ENCODE measurements at regions of chr4 and their contacts with region 1.

Region 1: GRCh38 chr4:136864580-136865185 is 667.6 kb downstream of the PCDH18 start:
- DNase-seq: peak; percentile 79
- ATAC-seq: peak; percentile 66
- H3K4me3 ChIP-seq: no peak overlapping the region
- H3K27ac ChIP-seq: no peak overlapping the region
- H3K4me1 ChIP-seq: no peaks in the 10 kb centered on the region
- H3K27me3 ChIP-seq: no peaks in the 10 kb centered on the region
- CTCF ChIP-seq: peak; percentile 81

Region 2: DNA sequence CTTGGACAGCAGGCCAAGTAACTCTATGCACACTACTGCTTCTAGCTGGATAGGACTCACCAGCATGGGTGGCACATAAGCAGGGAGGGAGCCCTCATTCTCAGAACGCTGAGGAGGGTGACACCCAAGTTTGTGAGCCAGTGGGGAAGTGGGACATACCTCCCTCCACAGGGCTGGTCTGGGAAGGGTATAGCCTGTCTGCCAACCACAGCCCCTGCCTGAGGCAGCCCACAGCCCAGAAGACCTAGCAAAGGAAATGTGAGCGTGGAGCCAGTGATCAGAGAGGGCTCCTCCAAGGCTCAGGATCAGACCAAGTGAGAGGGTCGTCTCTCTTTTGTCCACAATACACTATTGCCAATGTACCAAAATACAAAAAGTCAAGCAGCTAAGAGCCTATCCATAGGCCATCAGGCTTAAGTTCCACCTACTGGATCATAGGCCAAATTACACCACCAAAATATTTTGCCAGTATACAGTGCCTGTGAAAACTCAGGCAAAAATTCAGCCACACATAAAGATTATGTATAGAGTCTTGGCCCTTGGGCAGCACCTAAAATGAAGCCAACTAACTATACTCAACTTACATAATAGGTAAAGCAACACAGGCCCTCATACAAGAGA is 535.5 kb before region 1 on chr4:
- CTCF ChIA-PET with region 1: no interaction called
- POLR2A ChIA-PET with region 1: no interaction called
- intact Hi-C with region 1: loop called (anchors 5 kb)
- DNase-seq: peak; percentile 20
- ATAC-seq: peak; percentile 70
- H3K4me3 ChIP-seq: no peak overlapping the region
- H3K27ac ChIP-seq: no peak overlapping the region
- H3K4me1 ChIP-seq: no peaks in the 10 kb centered on the region
- H3K27me3 ChIP-seq: no peaks in the 10 kb centered on the region
- CTCF ChIP-seq: peak; percentile 50

Region 3: DNA sequence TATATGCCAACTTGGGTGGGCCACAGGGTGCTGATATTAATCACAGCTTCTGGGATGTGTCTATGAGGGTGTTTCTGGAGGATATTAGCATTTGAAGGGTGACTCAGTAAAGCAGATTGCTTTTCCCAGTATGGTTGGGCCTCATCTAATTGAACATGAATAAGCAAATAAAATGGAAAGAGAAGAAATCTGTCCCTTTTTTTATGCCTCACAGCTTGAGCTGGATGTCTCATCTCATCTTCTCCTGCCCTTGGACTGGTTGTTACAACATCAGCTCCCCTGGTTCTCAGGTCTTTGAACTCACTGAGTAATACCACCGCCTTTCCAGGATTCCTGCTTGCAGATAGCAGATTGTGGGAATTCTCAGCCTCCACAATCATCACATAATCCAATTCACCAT is 481.6 kb before region 1 on chr4:
- CTCF ChIA-PET with region 1: no interaction called
- POLR2A ChIA-PET with region 1: no interaction called
- intact Hi-C with region 1: loop called (anchors 10 kb)
- DNase-seq: no peak
- ATAC-seq: no peak
- H3K4me3 ChIP-seq: no peak overlapping the region
- H3K27ac ChIP-seq: no peak overlapping the region
- H3K4me1 ChIP-seq: no peaks in the 10 kb centered on the region
- H3K27me3 ChIP-seq: no peaks in the 10 kb centered on the region
- CTCF ChIP-seq: no peak

Region 4: DNA sequence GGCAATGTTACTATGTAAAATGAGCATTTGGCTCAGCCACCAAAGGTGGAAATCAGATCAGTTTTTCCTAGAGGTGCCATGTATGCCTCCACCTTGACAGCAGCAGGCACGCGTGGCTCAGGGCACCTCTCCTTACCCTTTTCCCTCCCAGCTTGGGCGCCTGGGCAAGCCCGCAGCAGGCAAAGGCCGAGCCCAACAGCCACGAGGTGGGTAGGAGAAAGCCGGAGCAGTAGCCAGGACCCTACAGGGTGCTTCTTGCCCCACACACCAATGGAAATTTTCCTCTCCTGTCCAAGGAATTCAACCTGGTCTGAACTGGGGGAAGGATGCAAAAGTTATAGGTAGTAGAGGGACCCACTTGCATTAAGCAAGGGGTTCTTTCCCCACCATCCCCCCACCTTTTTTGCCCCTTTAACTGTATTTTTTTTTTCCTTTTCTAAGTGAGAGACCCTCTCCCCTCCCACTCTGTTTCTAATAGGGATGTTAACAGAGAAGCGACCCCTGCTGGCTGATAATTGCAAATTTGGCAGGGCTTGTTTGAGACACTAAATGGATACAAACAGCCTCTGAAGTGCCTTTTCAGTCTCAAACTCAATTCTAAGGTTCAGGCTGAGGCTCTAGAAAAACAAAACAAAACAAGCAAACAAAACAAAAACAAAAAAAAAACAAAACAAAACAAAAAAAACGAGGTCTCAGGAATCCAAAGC is 227.5 kb before region 1 on chr4:
- CTCF ChIA-PET with region 1: no interaction called
- POLR2A ChIA-PET with region 1: no interaction called
- intact Hi-C with region 1: loop called (anchors 10 kb)
- DNase-seq: peak; percentile 28
- ATAC-seq: no peak
- H3K4me3 ChIP-seq: no peak overlapping the region
- H3K27ac ChIP-seq: no peak overlapping the region
- H3K4me1 ChIP-seq: no peaks in the 10 kb centered on the region
- H3K27me3 ChIP-seq: no peaks in the 10 kb centered on the region
- CTCF ChIP-seq: peak; percentile 61

Region 5: DNA sequence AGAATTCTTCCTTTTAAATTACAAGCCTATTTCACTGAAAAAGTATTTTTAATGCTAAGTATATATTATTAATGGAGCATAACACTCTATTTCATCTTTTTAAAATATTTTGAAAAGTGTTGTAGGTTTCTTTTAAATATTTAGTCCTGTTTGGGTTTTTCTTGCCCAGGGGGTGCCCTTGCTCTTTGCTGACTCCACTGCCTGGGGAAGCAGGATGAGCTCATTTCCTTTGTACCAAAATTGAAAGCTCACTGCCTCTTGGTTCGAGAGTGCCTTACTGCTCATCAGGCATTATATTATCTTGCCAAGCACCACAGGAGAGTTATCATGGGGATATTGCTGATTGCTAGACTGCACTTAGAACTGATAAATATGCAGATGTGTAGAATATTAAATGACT is 151.5 kb before region 1 on chr4:
- CTCF ChIA-PET with region 1: interaction called, 8 read pairs
- POLR2A ChIA-PET with region 1: no interaction called
- intact Hi-C with region 1: loop called (anchors 5 kb)
- DNase-seq: peak; percentile 19
- ATAC-seq: peak; percentile 37; the same call in 1 of the 2 replicates
- H3K4me3 ChIP-seq: no peak overlapping the region
- H3K27ac ChIP-seq: no peak overlapping the region
- H3K4me1 ChIP-seq: no peaks in the 10 kb centered on the region
- H3K27me3 ChIP-seq: no peaks in the 10 kb centered on the region
- CTCF ChIP-seq: no peak; the same call in 1 of the 2 replicates

Region 6: GRCh38 chr4:137043184-137043583 is 178.5 kb after region 1 on chr4:
- CTCF ChIA-PET with region 1: no interaction called
- POLR2A ChIA-PET with region 1: no interaction called
- intact Hi-C with region 1: no loop called
- DNase-seq: no peak
- ATAC-seq: no peak
- H3K4me3 ChIP-seq: no peak overlapping the region
- H3K27ac ChIP-seq: no peak overlapping the region
- H3K4me1 ChIP-seq: no peaks in the 10 kb centered on the region
- H3K27me3 ChIP-seq: no peaks in the 10 kb centered on the region
- CTCF ChIP-seq: no peak